HEK293T (cell line): ENCODE measurements at regions of chr3 and their contacts with region 1.

Region 1: DNA sequence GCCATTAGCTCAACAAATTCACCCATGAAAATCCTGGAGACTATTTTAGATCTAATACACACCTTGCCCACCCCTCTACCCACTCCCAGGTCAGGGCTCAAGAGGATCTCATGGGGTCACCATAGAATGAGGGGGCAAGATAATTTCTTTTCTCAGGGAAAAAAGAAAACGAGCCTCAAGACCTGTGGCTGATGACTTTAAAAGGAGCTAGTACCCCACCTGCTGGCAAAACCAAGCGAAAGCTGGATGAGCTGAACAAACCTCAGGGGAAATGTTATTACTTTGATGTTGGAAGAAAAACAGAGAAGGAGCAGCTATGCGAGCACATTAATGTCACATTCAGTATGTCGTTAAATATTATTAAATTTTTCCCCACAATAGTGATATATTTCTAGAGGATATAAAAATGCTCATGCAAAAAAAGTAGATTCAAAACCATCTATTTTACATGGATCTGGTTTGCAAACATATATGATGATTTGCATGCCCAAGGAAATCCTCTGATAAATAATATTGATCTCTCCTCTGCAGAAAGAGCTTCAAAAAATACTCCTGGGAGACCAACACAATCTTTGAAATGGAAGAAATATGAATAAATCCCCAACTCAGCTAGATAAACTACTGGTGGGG is 37.7 kb downstream of the PLD1 start:
- DNase-seq: peak; percentile 64

Region 2: DNA sequence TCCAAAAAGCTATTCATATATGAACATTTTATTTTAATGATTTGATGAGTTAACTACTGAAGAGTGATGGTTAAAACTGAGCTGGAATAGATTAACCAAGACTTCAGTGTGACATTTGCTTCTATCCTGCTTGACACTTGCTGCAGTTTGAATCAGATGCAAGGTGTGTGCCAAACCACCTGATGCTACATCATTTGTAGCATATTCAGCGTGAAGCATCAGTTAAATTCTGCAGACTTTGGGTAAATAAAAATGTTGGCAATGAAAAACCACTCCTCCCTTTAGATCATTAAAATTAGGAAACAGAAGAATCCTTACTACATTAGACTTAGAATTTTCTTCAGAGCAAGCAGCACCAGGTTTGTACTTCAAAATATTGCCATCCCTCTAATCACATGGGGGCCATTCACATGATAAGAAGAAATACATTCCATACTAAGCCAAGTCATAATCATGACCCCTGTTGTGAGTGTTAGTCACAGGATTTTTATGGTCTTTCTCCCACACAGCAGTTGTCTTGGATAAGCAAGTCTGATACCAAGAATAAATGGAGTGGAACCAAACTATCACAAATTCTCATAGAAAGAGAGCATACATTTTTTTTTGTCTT is 151.6 kb before region 1 on chr3:
- CTCF ChIA-PET with region 1: no interaction called
- POLR2A ChIA-PET with region 1: no interaction called
- DNase-seq: peak; percentile 50

Region 3: GRCh38 chr3:171757361-171758034 is 15.0 kb before region 1 on chr3:
- CTCF ChIA-PET with region 1: interaction called, 10 read pairs
- POLR2A ChIA-PET with region 1: no interaction called
- DNase-seq: no peak

Region 4: DNA sequence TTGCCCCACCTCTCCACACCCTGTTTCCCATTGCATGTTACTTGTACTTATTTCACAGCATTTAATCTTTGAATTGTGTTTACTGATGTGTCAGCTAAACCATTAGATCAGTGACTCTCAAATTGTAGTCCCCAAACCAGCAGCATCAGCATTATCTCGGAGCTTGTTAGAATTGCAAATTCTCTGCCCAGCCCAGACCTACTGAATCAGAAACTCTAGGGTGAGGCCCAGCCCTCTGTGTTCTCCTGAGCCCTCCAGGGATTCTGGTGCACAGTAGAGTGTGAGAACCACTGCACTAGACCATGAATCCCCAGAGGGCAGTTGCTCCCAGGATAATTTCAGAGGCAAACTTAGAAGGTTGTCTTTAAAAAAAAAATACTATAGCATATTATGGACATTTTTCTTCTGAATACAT is 24.7 kb after region 1 on chr3:
- CTCF ChIA-PET with region 1: no interaction called
- POLR2A ChIA-PET with region 1: no interaction called
- DNase-seq: no peak

Region 5: DNA sequence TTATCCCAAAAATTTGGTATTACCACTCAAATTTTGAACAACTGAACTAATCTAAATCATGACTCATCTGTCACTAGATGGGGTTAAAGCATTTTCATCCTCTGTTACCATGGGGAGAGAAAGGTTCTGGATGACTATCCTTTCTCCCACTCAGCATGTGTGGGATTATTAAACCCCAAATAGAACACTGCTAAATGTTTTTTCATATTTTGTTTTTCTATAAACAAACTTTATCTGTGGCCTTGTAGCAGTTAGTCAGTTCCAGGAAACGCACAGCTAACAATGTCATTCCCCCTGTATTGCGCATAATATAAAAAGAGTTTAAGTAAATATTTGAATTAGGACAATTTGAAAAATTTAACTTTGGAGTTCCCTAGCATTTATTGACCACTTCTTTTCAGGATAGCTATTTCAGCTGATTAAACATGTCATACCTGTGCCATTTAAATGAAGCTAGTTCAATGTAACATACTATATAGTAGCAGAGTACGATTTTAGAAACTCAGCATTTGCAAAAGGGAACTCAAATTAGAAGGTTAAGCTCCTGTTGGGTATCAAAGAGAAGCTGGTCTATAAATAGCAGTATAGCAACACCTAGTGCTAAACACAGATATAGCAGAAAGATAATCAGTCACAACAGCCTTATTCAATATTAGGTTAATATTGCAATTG is 61.4 kb after region 1 on chr3:
- CTCF ChIA-PET with region 1: interaction called, 10 read pairs
- POLR2A ChIA-PET with region 1: no interaction called
- DNase-seq: no peak

Region 6: GRCh38 chr3:171944511-171944952 is 172.0 kb after region 1 on chr3:
- CTCF ChIA-PET with region 1: no interaction called
- POLR2A ChIA-PET with region 1: no interaction called
- DNase-seq: peak; percentile 34